ENCODE measurements at regions of chr1 and their contacts with region 1.

Region 1: GRCh38 chr1:93447516-93448291 is at the start of gene FNBP1L:
- DNase-seq: peak; percentile 81 to 83
- ATAC-seq: peak; percentile 94 to 97 (median 96)
- H3K4me3 ChIP-seq: peak within 1 kb of the TSS; percentile 71 to 100 (median 97)
- H3K27ac ChIP-seq: peak within 1 kb of the TSS; percentile 86 to 97 (median 91)
- H3K4me1 ChIP-seq: peaks cover 0 to 32% (median 21%) of the 10 kb centered on the region in 9 donors
- H3K27me3 ChIP-seq: peaks cover 0 to 24% (median 0%) of the 10 kb centered on the region in 7 donors
- CTCF ChIP-seq: no peak
- total RNA-seq, gene FNBP1L: 17.9 to 41.4 (median 24.1) TPM

Region 2: DNA sequence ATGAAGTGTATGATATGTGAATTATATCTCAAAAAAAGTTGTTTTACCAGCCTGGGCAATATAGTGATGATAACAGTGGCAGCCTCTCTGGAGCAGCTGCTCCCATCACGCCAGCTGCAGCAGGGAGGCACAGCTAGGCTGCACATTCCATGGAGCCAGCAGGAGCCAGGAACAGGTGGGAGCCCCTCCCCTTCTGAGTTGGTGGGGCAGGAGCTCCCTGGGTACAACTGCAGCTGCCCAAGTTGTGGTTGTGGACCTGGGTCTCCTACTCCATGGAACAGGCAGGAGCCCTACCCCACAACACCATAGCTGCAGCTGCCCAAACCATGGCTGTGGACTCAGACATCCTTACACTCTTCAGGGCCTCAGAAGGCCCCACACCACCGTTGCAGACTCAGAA is 21.5 kb before region 1 on chr1:
- intact Hi-C with region 1: no loop called
- DNase-seq: no peak
- ATAC-seq: peak in 1 of 8 donors; percentile 45
- H3K4me3 ChIP-seq: no peak overlapping the region
- H3K27ac ChIP-seq: no peak overlapping the region
- H3K4me1 ChIP-seq: peaks cover 0 to 3% (median 0%) of the 10 kb centered on the region in 9 donors
- H3K27me3 ChIP-seq: no peaks in the 10 kb centered on the region
- CTCF ChIP-seq: no peak

Region 3: GRCh38 chr1:93537924-93538323 is 90.2 kb after region 1 on chr1:
- intact Hi-C with region 1: loop called in 1 of 10 experiments (anchors 5 kb)
- DNase-seq: no peak
- ATAC-seq: no peak
- H3K4me3 ChIP-seq: no peak overlapping the region
- H3K27ac ChIP-seq: peak overlapping the region in 1 of 10 donors; percentile 5
- H3K4me1 ChIP-seq: peaks cover 0 to 22% (median 0%) of the 10 kb centered on the region in 9 donors
- H3K27me3 ChIP-seq: no peaks in the 10 kb centered on the region
- CTCF ChIP-seq: no peak

Region 4: GRCh38 chr1:93552741-93553455 is 105.2 kb after region 1 on chr1:
- intact Hi-C with region 1: loop called in 6 of 10 experiments (anchors 5 to 10 kb)
- DNase-seq: peak in 1 of 2 donors; percentile 31
- ATAC-seq: peak in 7 of 8 donors; percentile 43 to 59 (median 49)
- H3K4me3 ChIP-seq: no peak overlapping the region
- H3K27ac ChIP-seq: peak overlapping the region; percentile 41 to 82 (median 71)
- H3K4me1 ChIP-seq: peaks cover 12 to 60% (median 44%) of the 10 kb centered on the region in 9 donors
- H3K27me3 ChIP-seq: no peaks in the 10 kb centered on the region
- CTCF ChIP-seq: no peak

Region 5: DNA sequence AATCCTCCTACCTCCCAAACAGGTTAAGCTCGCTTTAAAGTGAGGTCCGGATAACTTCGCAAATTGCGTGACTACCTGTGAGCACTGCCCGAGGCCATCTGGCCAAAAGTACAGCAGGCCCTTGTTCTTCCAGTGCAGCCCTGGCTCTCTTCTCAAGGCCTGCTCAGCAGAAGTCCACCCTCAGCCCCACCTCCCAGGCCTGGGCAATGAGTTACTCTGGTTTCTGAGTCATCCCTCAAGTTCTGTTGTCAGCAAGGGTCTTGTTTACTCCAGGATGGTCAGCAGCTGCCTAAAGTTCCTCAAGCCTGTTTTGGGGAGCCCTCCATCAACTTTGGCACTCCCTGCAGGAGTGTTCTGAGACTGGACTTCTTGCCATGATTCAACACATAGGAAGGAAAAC is 132.2 kb after region 1 on chr1:
- intact Hi-C with region 1: loop called in 1 of 10 experiments (anchors 10 kb)
- DNase-seq: peak in 1 of 2 donors; percentile 34
- ATAC-seq: peak in 6 of 8 donors; percentile 12 to 55 (median 30)
- H3K4me3 ChIP-seq: no peak overlapping the region
- H3K27ac ChIP-seq: peak overlapping the region in 8 of 10 donors; percentile 25 to 63 (median 44)
- H3K4me1 ChIP-seq: peaks cover 7 to 68% (median 46%) of the 10 kb centered on the region in 9 donors
- H3K27me3 ChIP-seq: no peaks in the 10 kb centered on the region
- CTCF ChIP-seq: no peak

Region 6: GRCh38 chr1:93615582-93616150 is 168.0 kb after region 1 on chr1:
- intact Hi-C with region 1: loop called in 3 of 10 experiments (anchors 5 to 10 kb)
- DNase-seq: no peak
- ATAC-seq: no peak
- H3K4me3 ChIP-seq: no peak overlapping the region
- H3K27ac ChIP-seq: peak overlapping the region in 8 of 10 donors; percentile 55 to 82 (median 74)
- H3K4me1 ChIP-seq: peaks cover 24 to 98% (median 65%) of the 10 kb centered on the region in 9 donors
- H3K27me3 ChIP-seq: no peaks in the 10 kb centered on the region
- CTCF ChIP-seq: no peak

Region 7: GRCh38 chr1:93623875-93624274 is 176.2 kb after region 1 on chr1:
- intact Hi-C with region 1: loop called in 5 of 10 experiments (anchors 1 to 10 kb)
- DNase-seq: no peak
- ATAC-seq: peak in 1 of 8 donors; percentile 40
- H3K4me3 ChIP-seq: no peak overlapping the region
- H3K27ac ChIP-seq: peak overlapping the region in 4 of 10 donors; percentile 64 to 74 (median 66)
- H3K4me1 ChIP-seq: peaks cover 6 to 74% (median 49%) of the 10 kb centered on the region in 9 donors
- H3K27me3 ChIP-seq: no peaks in the 10 kb centered on the region
- CTCF ChIP-seq: no peak

Region 8: GRCh38 chr1:93708734-93709481 is 261.2 kb after region 1 on chr1:
- intact Hi-C with region 1: no loop called
- DNase-seq: peak; percentile 33 to 60
- ATAC-seq: peak; percentile 82 to 92 (median 90)
- H3K4me3 ChIP-seq: no peak overlapping the region
- H3K27ac ChIP-seq: peak overlapping the region in 9 of 10 donors; percentile 28 to 70 (median 50)
- H3K4me1 ChIP-seq: peaks cover 11 to 46% (median 32%) of the 10 kb centered on the region in 9 donors
- H3K27me3 ChIP-seq: no peaks in the 10 kb centered on the region
- CTCF ChIP-seq: no peak

Region 9: DNA sequence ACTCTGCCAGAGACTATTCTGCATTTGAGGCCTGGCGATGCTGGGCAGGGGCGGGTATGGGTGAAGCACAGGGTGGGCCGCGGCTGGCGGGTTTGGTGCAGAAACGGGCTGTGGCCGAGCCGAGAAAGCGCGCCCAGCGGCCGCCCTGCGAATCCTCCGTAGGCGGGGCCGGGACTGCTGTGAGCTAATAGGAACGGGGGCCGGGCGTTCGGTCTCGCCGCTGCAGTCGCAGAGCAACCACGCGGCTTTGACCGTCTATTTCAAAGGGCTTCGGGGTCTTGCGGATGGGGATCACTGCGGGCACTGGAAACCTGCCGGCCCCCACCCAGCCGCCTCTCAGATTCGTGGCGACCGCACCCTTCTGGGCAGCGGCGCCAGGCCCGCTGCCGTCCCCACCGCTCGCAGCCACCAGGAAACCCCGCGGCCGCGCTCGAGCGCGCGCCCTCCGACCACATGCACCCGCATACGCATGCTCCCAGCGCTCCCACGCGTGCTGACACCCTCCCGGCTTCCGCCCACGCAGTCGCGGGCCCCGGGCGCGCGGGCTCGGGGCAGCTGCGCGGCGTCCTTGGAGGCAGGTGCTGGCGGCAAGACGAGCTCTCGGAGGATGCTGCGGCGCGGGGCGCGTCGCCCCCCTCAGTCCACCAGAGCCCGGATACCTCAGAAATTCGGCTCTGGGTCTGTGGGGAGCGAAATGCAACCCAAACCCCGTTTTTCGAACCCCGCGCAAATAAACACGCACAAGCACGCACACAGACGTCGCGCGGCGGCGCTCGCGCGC is 398.7 kb after region 1 on chr1:
- intact Hi-C with region 1: loop called in 2 of 10 experiments (anchors 5 kb)
- DNase-seq: peak; percentile 89
- ATAC-seq: peak; percentile 64 to 81 (median 76)
- H3K4me3 ChIP-seq: peak overlapping the region; percentile 69 to 93 (median 86)
- H3K27ac ChIP-seq: peak overlapping the region; percentile 86 to 98 (median 96)
- H3K4me1 ChIP-seq: peaks cover 4 to 38% (median 31%) of the 10 kb centered on the region in 9 donors
- H3K27me3 ChIP-seq: no peaks in the 10 kb centered on the region
- CTCF ChIP-seq: peak in 7 of 9 donors; percentile 17 to 57 (median 40)